ENCODE measurements at regions of chr7 and their contacts with region 1.

Region 1: DNA sequence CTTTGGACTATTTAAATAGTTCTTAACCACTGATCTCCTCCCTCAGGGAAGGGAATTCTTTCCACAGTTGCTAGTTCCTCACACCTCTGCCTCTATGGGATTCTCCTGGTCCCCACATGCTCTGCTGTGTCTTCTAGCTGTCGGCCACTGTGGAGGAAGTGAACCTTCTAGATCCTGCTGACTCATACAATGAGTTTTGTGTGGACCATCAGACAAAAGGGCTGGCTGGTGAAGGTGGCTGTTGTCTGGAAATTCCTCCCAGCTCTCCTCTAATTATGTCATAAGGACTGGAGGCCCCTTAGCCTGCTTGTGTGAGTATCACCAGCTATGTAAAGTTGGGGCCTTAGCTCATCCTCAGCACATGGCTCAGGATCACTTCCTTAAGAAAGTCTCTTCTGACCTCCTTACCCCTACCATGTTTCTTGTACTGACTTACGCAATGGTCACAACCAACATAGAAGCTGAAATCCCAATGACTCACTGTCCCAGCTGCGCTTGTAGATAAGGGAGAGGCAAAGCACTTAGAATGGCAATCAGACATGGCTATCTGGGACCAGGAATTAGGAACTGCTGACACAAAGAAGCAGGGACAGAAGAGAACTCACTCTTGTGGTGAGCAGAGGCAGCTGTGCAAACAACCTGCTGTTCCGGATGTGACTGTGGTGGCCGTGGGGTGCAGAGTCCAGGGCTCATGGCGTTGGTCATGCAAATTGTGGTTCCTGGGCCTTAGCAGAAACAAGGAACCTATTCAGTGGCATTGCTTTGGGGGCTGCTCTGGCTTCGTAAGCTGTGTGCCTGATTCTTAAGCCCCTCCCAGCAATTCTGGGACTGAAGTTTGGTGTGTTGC is 2.5 kb upstream of the MACC1 start:
- DNase-seq: peak; percentile 83 to 100
- H3K4me3 ChIP-seq: peak overlapping the region; percentile 3; the same call in 1 of the 2 replicates
- H3K27ac ChIP-seq: peak overlapping the region; percentile 99
- H3K4me1 ChIP-seq: peaks cover 61% of the 10 kb centered on the region
- H3K27me3 ChIP-seq: no peaks in the 10 kb centered on the region
- CTCF ChIP-seq: no peak

Region 2: DNA sequence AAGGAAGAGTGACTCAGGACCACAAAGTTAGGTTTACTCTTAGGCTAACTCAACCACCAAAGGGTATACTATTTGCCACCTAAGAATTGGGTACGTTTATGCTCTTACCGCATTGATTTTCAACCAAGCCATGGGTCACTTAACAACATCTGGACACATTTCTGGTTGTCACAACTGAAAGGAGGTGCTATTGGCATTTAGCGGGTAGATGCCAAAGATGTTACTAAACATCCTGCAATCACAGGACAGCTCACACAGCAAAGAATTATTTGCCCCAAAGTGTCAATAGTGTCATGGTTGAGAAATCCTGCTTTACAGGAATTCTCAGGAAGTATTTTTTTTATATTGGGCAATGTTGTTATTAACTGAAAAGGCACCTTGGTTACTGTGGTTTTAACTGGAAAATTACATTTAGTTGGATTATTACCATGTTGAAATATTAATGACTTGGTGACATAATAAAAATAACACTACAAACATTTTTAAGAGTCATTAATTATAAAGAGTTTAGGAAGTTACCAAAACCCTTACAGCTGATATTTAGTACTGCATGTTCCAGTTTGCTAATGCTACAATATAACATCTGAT is 261.3 kb before region 1 on chr7:
- CTCF ChIA-PET with region 1: no interaction called
- POLR2A ChIA-PET with region 1: no interaction called
- intact Hi-C with region 1: loop called (anchors 1 kb)
- DNase-seq: peak; percentile 70 to 100
- H3K4me3 ChIP-seq: peak overlapping the region; percentile 3; the same call in 1 of the 2 replicates
- H3K27ac ChIP-seq: peak overlapping the region; percentile 88
- H3K4me1 ChIP-seq: peaks cover 32% of the 10 kb centered on the region
- H3K27me3 ChIP-seq: no peaks in the 10 kb centered on the region
- CTCF ChIP-seq: no peak; the same call in 1 of the 2 replicates

Region 3: DNA sequence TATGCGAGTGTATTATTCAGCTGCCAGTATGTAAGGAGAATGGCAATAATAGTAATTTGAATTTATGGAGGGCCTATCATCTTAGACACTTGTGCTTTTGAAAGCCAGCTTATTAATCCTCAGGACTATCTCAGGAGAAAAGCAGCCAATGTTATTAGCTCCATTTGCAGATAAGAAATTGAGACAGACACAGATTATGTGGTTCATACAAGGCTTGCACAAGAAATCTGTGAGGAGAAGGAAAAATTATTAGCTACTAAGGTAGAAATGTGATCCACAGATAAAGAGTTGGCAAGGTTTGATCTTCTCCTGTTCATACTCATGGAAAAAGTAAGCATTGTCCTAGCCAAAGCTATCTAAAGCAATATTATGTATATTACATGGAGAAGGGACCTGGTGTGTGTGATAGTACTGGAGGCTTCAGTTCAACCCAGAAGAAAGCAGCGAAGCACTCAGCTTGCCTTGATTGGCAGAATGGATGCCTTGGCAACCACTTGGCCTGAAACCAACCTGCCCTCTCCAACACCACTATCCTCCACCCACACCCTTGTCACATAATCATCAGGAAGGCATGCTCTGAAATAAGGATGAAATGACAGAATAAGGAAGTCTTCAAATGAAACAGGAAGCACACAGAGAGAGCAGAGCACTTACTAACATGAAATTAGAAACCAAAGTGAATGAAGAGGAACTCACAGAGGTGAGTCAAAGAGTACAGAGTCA is 20.5 kb before region 1 on chr7:
- CTCF ChIA-PET with region 1: no interaction called
- POLR2A ChIA-PET with region 1: interaction called, 10 read pairs
- intact Hi-C with region 1: loop called (anchors 1 kb)
- DNase-seq: peak; percentile 89 to 91
- H3K4me3 ChIP-seq: no peak overlapping the region
- H3K27ac ChIP-seq: peak overlapping the region; percentile 65
- H3K4me1 ChIP-seq: peaks cover 24% of the 10 kb centered on the region
- H3K27me3 ChIP-seq: no peaks in the 10 kb centered on the region
- CTCF ChIP-seq: no peak

Region 4: DNA sequence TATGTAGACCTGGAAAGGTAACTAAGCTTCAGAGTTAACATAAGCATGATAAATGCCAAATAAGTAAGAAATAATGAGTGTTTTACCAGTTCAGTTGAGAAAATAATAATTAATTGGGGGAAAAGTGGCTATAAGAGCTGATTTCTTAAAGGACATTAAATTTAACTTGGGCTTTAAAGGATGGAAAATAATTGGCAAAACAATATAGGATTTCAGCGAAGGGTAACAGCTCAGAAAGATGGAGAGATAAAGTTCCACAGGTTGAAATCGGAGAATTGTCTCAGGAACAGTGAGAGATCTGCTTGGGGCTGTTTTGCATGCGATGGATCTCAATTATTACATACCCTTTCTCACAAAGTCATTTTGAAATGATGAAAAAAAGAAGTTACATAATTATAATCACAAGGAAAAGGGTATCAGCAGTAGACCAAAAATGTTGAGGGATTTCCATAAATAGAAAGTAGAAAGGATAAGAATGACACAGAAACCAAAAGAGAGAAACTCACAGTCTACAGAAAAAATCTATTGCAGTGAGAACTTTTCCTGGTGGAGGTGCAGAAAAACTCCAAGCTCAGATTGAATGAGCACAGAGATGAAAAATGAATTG is 70.9 kb after region 1 on chr7:
- CTCF ChIA-PET with region 1: no interaction called
- POLR2A ChIA-PET with region 1: no interaction called
- intact Hi-C with region 1: loop called (anchors 2 kb)
- DNase-seq: no peak
- H3K4me3 ChIP-seq: no peak overlapping the region
- H3K27ac ChIP-seq: no peak overlapping the region
- H3K4me1 ChIP-seq: no peaks in the 10 kb centered on the region
- H3K27me3 ChIP-seq: no peaks in the 10 kb centered on the region
- CTCF ChIP-seq: no peak

Region 5: DNA sequence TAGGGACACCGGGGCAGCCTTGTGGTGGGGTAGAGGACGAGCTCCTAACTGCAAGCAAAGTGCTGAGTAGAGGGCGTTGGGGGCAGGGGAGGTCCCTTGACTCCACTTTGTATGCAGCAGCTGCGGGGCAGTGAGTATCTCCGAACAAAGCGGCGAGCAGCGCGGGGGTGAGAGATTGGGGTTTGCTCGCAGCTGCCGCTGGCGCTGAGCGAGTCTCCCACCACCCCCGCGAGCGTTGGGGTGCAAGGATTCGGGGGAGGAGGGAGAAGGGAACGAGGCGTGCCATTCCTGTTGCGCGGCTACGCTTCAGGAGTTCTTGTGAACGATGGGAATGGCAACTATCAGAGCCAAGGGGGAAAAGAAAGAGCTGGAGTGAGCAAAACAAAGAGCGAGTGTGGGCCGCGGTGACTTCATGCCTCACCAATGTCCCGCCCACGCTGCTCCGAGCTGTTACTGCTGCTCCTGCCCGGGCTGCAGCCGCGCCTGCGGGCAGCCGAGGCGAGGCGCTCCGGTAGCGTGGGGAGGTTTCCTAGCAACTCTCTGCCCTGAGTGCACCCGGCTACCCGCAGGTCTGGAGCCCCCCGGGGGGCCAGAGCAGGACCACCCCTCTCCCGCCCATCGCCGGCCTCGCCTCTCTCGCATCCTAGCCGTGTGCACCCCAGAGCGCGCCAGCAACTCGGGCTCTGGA is 110.7 kb after region 1 on chr7 and contains the start of gene ITGB8:
- CTCF ChIA-PET with region 1: no interaction called
- POLR2A ChIA-PET with region 1: interaction called, 7 read pairs
- intact Hi-C with region 1: loop called (anchors 1 kb)
- DNase-seq: peak; percentile 86 to 87
- H3K4me3 ChIP-seq: peak within 1 kb of the TSS; percentile 63
- H3K27ac ChIP-seq: peak within 1 kb of the TSS; percentile 77
- H3K4me1 ChIP-seq: peaks cover 49% of the 10 kb centered on the region
- H3K27me3 ChIP-seq: no peaks in the 10 kb centered on the region
- CTCF ChIP-seq: no peak
- total RNA-seq, gene ITGB8: 19.4 and 20.1 TPM in 2 replicates

Region 6: GRCh38 chr7:20343205-20343604 is 123.5 kb after region 1 on chr7:
- CTCF ChIA-PET with region 1: no interaction called
- POLR2A ChIA-PET with region 1: no interaction called
- intact Hi-C with region 1: no loop called
- DNase-seq: no peak
- H3K4me3 ChIP-seq: no peak overlapping the region
- H3K27ac ChIP-seq: no peak overlapping the region
- H3K4me1 ChIP-seq: peaks cover 17% of the 10 kb centered on the region
- H3K27me3 ChIP-seq: no peaks in the 10 kb centered on the region
- CTCF ChIP-seq: no peak

Region 7: GRCh38 chr7:20407585-20408461 is 188.2 kb after region 1 on chr7:
- CTCF ChIA-PET with region 1: no interaction called
- POLR2A ChIA-PET with region 1: no interaction called
- intact Hi-C with region 1: loop called (anchors 5 kb)
- DNase-seq: peak; percentile 59 to 91
- H3K4me3 ChIP-seq: no peak overlapping the region; the same call in 1 of the 2 replicates
- H3K27ac ChIP-seq: peak overlapping the region; percentile 72
- H3K4me1 ChIP-seq: peaks cover 30% of the 10 kb centered on the region
- H3K27me3 ChIP-seq: no peaks in the 10 kb centered on the region
- CTCF ChIP-seq: no peak

Region 8: GRCh38 chr7:21371360-21371759 is 1151.7 kb after region 1 on chr7:
- CTCF ChIA-PET with region 1: no interaction called
- POLR2A ChIA-PET with region 1: no interaction called
- intact Hi-C with region 1: no loop called
- DNase-seq: no peak
- H3K4me3 ChIP-seq: no peak overlapping the region
- H3K27ac ChIP-seq: no peak overlapping the region
- H3K4me1 ChIP-seq: peaks cover 10% of the 10 kb centered on the region
- H3K27me3 ChIP-seq: no peaks in the 10 kb centered on the region
- CTCF ChIP-seq: no peak